PC-3 (cell line): ENCODE measurements at regions of chr18 and their contacts with region 1.

Region 1: DNA sequence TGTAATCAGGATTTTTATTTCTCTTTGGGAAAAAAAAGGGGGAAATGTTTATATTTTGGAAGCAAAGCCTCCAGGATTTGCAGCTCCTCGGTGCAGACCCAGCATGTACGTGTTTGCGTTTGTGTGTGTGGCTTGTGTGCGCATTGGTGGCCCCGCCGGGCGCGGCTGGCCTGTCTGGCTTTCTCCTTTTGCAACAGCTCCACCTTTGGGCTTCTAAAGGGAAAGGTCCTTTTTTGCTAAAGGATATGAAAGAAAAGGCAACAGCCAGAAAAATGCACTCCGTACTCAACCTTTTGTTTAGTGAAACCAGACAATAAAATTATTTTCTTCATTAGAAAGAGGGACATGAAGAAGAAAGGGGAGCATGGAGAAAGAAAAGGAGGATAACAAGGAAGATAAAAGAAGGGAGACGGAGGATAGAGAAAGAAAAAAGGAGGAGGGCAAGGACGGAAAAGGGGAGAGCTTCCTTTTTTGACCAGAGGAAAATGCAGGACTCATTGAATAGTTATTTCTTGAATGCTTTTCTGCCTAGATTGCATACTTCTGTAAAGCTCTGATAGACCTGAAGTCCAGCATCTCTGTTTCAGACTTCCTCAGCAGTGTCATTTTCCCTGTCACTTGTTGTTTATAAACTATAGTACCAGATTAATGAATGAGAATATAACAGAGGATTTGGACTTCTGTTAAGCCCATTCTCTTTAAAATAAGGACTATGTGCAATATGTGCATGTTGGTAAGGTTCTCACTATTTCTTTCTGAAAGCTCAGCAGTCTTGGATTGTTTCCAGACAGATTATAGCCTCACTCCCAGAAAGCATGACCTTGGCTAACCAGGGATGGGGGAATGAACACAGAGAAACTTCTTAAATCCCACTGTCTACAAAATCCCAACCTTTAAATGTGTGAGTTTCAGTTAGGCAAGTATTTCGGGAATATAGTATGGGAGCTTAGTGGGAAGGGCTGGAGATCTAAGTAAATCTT is 563.1 kb upstream of the PIK3C3 start:
- DNase-seq: peak; percentile 54
- ATAC-seq: peak; percentile 47
- H3K4me3 ChIP-seq: peak overlapping the region; percentile 60
- H3K27ac ChIP-seq: no peak overlapping the region
- H3K4me1 ChIP-seq: peaks cover 27% of the 10 kb centered on the region
- H3K27me3 ChIP-seq: no peaks in the 10 kb centered on the region
- CTCF ChIP-seq: peak; percentile 67

Region 2: DNA sequence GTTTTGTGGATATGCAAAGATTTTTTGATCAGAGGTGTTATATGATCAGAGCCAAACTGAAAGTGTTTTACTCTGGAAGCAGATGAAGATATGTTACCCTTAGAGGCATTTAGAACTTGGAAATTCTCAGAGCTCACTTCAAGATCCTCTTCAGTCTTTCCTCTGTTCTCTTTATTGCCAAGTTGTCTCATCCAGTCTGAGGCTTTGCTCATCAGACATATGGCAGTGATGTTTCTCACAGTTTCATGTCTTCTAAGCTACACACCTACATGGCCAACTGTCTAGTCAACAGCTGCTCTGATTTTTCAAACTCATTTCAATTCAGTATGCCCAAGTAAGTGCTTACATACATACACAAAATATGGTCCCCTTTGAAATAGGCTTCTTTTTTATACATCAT is 941.2 kb before region 1 on chr18:
- CTCF ChIA-PET with region 1: no interaction called
- POLR2A ChIA-PET with region 1: no interaction called
- intact Hi-C with region 1: loop called (anchors 10 kb)
- DNase-seq: no peak
- ATAC-seq: no peak
- H3K4me3 ChIP-seq: no peak overlapping the region
- H3K27ac ChIP-seq: no peak overlapping the region
- H3K4me1 ChIP-seq: no peaks in the 10 kb centered on the region
- H3K27me3 ChIP-seq: no peaks in the 10 kb centered on the region
- CTCF ChIP-seq: no peak

Region 3: DNA sequence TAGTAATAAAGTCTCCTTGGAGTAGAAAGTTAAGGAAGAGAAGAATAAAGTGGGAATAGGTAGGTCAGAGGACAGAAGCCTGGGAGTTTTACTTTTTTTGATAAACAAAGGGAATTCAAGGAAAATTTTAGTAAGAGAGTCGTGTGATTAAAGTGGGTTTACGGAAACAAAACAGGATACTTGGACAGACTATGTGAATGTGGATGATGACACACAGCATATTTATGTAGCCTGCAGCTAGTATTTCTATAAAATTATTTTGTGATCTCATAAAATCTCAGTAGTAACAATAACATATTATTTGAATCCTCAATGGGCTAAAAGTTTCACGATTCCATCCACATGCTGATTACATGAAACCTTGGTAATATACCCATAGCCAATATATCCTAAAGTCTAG is 112.4 kb after region 1 on chr18:
- CTCF ChIA-PET with region 1: interaction called, 5 read pairs
- POLR2A ChIA-PET with region 1: no interaction called
- intact Hi-C with region 1: loop called (anchors 1 kb)
- DNase-seq: peak; percentile 64
- ATAC-seq: peak; percentile 58
- H3K4me3 ChIP-seq: 0 out of 2 replicates have a peak overlapping the region, but pooled peaks have one; percentile 32
- H3K27ac ChIP-seq: peak overlapping the region; percentile 99
- H3K4me1 ChIP-seq: peaks cover 29% of the 10 kb centered on the region
- H3K27me3 ChIP-seq: no peaks in the 10 kb centered on the region
- CTCF ChIP-seq: no peak

Region 4: DNA sequence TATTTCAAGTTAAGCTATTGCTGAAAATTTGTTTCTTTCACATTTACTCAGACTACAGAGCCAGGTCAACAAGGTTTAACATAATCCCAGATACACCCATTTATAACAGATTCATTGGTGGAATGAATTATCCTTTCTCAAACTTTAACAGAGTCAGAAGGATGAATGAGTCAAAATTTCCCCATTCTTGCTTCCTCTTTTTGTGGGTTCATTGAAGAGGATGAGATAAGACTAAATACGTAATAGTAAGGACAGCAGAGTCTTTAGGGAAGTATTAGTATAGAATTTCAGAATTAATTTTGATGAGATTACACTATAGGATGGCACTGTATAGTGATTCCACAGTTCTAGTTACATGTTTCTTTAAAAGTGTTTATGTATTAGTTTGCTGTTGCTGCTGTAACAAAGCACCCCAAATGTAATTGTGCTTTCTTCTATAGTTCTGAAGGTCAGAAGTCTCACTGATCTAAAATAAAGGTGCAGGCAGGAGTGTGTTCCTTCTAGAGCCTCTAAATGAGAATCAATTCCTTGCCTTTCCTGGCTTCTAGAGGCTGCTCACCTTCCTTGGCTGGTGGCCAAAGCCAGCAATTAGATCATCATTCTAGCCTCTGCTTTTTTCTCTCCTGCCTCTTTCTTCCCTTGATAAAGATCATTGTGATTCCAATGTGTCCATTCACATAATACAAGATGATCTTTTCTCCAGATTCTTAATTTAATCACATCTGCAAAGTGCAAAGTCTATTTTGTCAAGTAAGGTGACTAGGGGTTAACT is 253.9 kb after region 1 on chr18:
- CTCF ChIA-PET with region 1: no interaction called
- POLR2A ChIA-PET with region 1: no interaction called
- intact Hi-C with region 1: loop called (anchors 10 kb)
- DNase-seq: peak; percentile 48
- ATAC-seq: no peak
- H3K4me3 ChIP-seq: no peak overlapping the region
- H3K27ac ChIP-seq: no peak overlapping the region
- H3K4me1 ChIP-seq: peaks cover 15% of the 10 kb centered on the region
- H3K27me3 ChIP-seq: no peaks in the 10 kb centered on the region
- CTCF ChIP-seq: no peak

Region 5: GRCh38 chr18:41906528-41907146 is 514.7 kb after region 1 on chr18:
- CTCF ChIA-PET with region 1: no interaction called
- POLR2A ChIA-PET with region 1: no interaction called
- intact Hi-C with region 1: loop called (anchors 5 kb)
- DNase-seq: peak; percentile 61
- ATAC-seq: peak; percentile 55
- H3K4me3 ChIP-seq: no peak overlapping the region
- H3K27ac ChIP-seq: no peak overlapping the region
- H3K4me1 ChIP-seq: peaks cover 9% of the 10 kb centered on the region; the same call in 1 of the 2 replicates
- H3K27me3 ChIP-seq: no peaks in the 10 kb centered on the region
- CTCF ChIP-seq: peak; percentile 58